ENCODE measurements at regions of chr16 and their contacts with region 1.

Region 1: DNA sequence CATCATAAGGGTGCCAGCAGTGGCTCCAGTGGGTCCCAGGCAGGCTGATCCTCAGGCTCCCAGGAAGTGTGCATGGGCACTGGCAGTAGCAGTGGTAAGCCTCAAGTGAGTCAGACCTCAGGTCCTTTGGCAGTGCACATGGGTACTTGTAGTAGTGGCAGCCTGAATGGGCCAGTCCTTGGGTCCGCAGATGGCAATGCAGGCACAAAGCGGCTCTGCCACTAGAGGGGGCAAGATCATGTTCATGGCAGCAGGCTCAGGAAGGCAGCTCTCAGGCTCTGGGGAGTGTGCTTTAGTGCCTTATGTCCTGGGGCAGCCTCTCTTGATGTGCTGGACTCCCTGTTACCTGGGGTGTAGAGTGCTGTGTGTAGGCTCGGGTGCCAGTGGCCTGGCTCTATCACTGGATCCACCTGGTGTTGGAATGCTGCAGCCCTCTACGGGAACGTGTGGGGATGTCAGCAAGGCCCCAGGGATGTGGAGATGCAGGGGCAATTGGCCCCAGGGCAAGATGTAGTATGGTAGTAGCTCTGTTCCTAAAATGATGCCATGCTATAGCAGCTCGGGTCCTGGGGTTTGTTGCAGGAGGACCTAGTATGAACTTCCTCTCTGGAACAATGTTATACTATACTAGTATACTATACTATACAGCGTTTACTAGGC is 11.0 kb downstream of the ACSM3 start:
- DNase-seq: peak; percentile 84
- H3K4me3 Mint-ChIP-seq: no peak overlapping the region
- H3K27ac Mint-ChIP-seq: no peak overlapping the region
- H3K4me1 Mint-ChIP-seq: no peaks in the 10 kb centered on the region
- H3K27me3 Mint-ChIP-seq: no peaks in the 10 kb centered on the region

Region 2: GRCh38 chr16:20637247-20637646 is 137.6 kb before region 1 on chr16:
- CTCF ChIA-PET with region 1: no interaction called
- DNase-seq: no peak
- H3K4me3 Mint-ChIP-seq: no peak overlapping the region
- H3K27ac Mint-ChIP-seq: no peak overlapping the region
- H3K4me1 Mint-ChIP-seq: no peaks in the 10 kb centered on the region
- H3K27me3 Mint-ChIP-seq: no peaks in the 10 kb centered on the region

Region 3: GRCh38 chr16:20747030-20747816 is 27.6 kb before region 1 on chr16:
- CTCF ChIA-PET with region 1: no interaction called
- DNase-seq: no peak
- H3K4me3 Mint-ChIP-seq: no peak overlapping the region
- H3K27ac Mint-ChIP-seq: no peak overlapping the region
- H3K4me1 Mint-ChIP-seq: peaks cover under 1% of the 10 kb centered on the region
- H3K27me3 Mint-ChIP-seq: peaks cover 16% of the 10 kb centered on the region

Region 4: DNA sequence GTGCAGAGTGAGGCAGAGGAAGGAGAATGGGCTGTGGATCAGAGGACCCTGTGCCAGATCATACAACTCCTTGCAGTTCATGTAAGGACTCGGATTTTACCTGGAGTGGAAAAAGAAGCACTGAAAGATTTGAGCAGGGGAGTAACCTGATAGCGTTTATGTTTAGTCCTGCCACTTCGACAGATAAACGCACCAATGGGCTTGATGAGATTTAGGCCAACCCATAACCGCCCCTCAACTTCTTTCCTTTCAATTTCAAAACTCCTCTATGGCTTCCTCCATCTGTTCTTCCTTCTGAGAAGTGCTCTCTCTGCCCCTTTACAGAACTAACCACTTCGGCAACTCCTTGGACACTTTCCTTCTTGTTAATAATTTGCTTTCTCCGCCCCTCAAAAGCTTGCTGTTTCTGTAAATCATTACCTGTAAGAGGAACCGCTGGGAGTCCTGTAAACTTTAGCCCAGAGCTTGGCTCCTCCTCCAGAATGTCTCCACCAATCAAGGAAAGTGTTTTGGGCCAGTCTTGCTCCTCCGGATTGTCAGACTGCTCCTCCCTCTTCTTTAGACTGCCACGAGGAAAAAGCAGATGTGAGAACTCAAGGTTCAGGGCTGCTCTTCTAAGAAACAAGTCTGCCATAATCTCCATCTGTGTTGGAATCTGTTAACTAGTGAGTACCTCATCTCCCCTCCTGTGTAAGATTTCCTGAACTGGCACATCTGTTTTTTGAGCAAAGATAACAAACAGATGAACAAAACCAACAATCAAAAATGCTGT is 11.2 kb before region 1 on chr16 and contains the start of gene ACSM3:
- CTCF ChIA-PET with region 1: interaction called, 28 read pairs
- DNase-seq: peak; percentile 79
- H3K4me3 Mint-ChIP-seq: peak within 1 kb of the TSS; percentile 84
- H3K27ac Mint-ChIP-seq: peak within 1 kb of the TSS; percentile 92
- H3K4me1 Mint-ChIP-seq: peaks cover 30% of the 10 kb centered on the region
- H3K27me3 Mint-ChIP-seq: no peaks in the 10 kb centered on the region

Region 5: GRCh38 chr16:20791923-20792612 is 17.2 kb after region 1 on chr16:
- CTCF ChIA-PET with region 1: interaction called, 13 read pairs
- DNase-seq: no peak
- H3K4me3 Mint-ChIP-seq: no peak overlapping the region
- H3K27ac Mint-ChIP-seq: no peak overlapping the region
- H3K4me1 Mint-ChIP-seq: no peaks in the 10 kb centered on the region
- H3K27me3 Mint-ChIP-seq: no peaks in the 10 kb centered on the region